PC-9 (cell line): ENCODE measurements at regions of chr17 and their contacts with region 1.

Region 1: GRCh38 chr17:80970044-80970761 is 21.4 kb upstream of the CHMP6 start:
- DNase-seq: peak in 1 of 2 experiments; percentile 37
- H3K4me3 ChIP-seq: no peak overlapping the region
- H3K27ac ChIP-seq: no peak overlapping the region
- H3K4me1 ChIP-seq: no peaks in the 10 kb centered on the region
- H3K27me3 ChIP-seq: no peaks in the 10 kb centered on the region
- CTCF ChIP-seq: peak; percentile 41; the same call in 1 of the 2 replicates

Region 2: DNA sequence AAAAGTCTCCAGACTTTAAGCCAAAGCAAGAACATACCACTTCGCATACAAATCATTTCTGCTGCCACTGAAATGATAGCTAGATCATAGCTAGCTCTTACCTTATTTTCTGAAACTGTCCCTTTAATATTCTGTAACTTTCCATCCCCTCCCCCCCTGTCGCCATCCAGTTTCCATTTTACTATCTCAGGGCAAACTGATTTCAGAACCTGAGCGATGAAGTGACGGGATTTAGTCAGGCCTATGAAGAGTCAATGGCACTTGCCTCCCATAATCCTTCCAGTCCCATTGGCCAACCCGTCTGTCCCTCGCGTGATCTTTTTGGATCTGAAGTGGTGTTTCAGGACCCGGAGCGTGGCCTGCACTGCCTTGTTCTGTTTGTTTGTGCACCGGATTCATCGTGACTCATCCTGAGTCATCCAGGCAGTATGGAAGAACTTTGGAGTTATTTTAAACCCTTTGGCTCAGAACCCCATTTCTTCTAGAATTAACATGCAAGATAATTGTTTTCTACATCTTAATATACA is 178.4 kb before region 1 on chr17:
- CTCF ChIA-PET with region 1: no interaction called
- POLR2A ChIA-PET with region 1: interaction called, 11 read pairs
- intact Hi-C with region 1: no loop called
- DNase-seq: peak; percentile 82 to 88
- H3K4me3 ChIP-seq: peak overlapping the region; percentile 26; the same call in 1 of the 2 replicates
- H3K27ac ChIP-seq: peak overlapping the region; percentile 77
- H3K4me1 ChIP-seq: peaks cover 46% of the 10 kb centered on the region
- H3K27me3 ChIP-seq: no peaks in the 10 kb centered on the region
- CTCF ChIP-seq: no peak

Region 3: DNA sequence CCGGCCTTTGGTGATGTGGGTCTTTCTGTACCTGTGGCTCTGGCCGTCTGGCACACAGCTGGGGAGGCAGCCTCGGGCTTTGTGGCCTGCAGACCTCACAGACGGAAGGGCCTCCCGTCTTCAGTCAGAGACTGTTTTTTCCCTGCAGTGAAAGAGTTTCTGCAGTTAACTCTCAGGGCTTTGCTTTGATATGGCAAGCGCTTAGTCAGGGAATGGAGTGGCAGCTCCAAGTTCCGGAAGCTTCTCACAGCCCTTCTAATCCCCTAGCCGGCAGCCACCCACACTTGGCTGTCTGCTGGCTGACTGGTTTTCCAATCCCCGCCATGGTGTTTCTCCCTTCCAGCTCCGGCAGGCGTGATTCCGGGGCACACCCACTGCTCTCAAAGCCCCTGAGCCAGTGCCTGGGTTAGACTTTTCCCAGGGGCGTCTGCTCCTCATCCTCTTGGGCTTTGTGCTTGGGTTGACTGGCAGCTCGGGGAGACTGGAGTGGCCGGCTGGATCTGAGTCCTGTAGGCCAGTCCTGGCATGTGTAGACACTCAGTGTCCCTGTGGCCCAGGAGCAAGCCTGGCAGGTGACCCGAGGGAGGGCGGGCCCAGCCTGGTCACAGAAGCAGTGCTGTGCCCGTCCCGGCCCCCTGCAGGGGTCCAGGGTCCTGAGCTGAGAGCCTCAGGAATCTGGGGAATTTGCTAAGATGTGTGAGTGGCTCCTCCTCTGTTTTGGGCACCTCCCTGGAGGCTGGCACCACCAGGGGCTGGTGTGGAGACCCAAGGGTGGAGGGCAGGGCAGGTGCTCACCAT is 94.7 kb after region 1 on chr17:
- CTCF ChIA-PET with region 1: no interaction called
- POLR2A ChIA-PET with region 1: no interaction called
- intact Hi-C with region 1: no loop called
- DNase-seq: peak in 1 of 2 experiments; percentile 50
- H3K4me3 ChIP-seq: no peak overlapping the region
- H3K27ac ChIP-seq: no peak overlapping the region
- H3K4me1 ChIP-seq: no peaks in the 10 kb centered on the region; the same call in 1 of the 2 replicates
- H3K27me3 ChIP-seq: no peaks in the 10 kb centered on the region
- CTCF ChIP-seq: no peak

Region 4: DNA sequence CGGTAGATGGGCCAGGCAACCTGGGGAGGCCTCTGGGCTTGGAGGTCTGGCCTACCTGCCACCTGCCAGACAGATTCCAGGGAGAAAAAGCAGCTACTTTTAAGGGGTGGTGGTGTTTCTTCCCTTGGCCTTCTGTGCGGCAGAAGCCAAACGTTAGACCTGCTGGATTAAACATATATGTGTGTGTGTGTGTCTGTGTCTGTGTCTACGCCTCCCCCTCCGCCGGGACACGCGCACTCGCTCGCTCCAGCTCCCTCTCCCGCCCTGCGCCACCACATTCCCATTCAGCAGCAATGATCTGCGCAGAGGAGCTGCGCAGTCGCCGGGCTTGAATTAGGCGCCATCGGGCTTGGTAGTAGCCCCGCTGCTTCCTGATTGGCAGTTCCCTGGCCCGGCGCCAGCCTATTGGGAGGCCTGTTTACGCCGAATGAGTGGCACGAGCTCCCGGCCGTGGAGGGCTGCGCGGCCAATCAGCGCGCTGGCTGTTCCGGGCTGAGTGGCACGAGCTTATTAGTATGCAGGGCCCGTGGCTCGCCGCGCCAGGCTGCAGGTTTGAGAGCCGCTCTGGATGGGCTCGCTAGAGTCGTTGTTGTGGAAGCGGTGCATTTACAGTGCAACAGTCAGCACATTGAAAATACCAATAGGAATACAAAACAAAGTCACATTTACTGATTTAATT is 424.9 kb after region 1 on chr17 and contains the start of gene BAHCC1:
- CTCF ChIA-PET with region 1: no interaction called
- POLR2A ChIA-PET with region 1: no interaction called
- intact Hi-C with region 1: no loop called
- DNase-seq: peak; percentile 96 to 100
- H3K4me3 ChIP-seq: peak within 1 kb of the TSS; percentile 78
- H3K27ac ChIP-seq: peak within 1 kb of the TSS; percentile 73
- H3K4me1 ChIP-seq: peaks cover 15% of the 10 kb centered on the region
- H3K27me3 ChIP-seq: no peaks in the 10 kb centered on the region
- CTCF ChIP-seq: no peak
- total RNA-seq, gene BAHCC1: 33.7 and 35.4 TPM in 2 replicates